ENCODE measurements at regions of chr9 and their contacts with region 1.

Region 1: DNA sequence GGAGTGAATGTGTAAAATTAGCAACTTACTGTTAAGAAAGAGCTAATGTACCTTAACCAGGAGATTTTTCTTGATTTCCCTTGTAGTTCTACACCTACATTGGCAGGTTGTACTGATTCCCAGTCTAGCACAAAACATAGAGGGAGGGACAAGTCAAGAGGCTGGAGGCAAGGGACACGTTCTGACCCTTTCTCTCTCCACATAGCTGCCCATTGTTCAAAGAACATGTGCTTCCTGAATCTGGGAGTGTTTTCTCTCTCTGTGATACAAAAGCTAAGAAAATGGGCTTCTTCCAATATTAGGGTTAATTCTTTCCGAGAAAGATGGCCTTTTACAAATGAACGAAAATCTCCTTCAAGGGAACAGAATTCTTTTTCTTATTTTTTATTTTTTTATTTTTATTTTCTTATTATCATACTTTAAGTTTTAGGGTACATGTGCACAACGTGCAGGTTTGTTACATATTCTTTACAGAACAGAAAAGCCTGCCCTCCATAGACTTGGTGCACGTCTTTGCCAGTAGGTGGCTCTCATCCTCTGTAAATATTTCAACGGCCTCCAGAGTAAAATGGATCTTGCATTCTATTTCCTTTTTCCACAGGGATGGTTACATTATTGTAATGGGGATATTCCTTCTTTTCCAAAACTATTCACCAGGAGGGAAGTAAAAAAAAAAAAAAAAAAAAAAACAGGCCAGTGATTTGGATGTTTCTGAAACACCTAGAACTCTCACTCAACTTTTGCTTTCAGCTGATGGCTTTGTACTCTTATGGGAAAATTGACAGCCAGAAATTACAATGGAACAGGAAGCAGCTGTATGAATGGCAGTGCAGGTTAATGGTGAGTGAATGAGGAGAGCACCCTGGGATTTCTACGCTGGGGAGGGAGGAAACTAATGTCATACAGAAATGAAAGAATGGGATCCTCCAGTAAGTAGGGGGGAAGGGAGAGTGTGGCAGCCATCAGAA is 13.1 kb upstream of the IFNA5 start:
- DNase-seq: no peak
- ATAC-seq: peak; percentile 94
- H3K4me3 ChIP-seq: no peak overlapping the region
- H3K27ac ChIP-seq: no peak overlapping the region
- H3K4me1 ChIP-seq: no peaks in the 10 kb centered on the region
- H3K27me3 ChIP-seq: no peaks in the 10 kb centered on the region
- CTCF ChIP-seq: peak; percentile 59 to 74 (median 66)
- EP300 ChIP-seq: no peak
- POLR2A ChIP-seq: no peak
- RAD21 ChIP-seq: peak; percentile 82

Region 2: GRCh38 chr9:21234153-21234687 is 84.0 kb before region 1 on chr9:
- CTCF ChIA-PET with region 1: interaction called, 14 read pairs
- POLR2A ChIA-PET with region 1: no interaction called
- RAD21 ChIA-PET with region 1: interaction called, 7 read pairs
- SMC1A ChIA-PET with region 1: interaction called, 9 read pairs
- in situ Hi-C with region 1: no loop called
- intact Hi-C with region 1: no loop called
- DNase-seq: no peak
- ATAC-seq: no peak
- H3K4me3 ChIP-seq: no peak overlapping the region
- H3K27ac ChIP-seq: no peak overlapping the region
- H3K4me1 ChIP-seq: no peaks in the 10 kb centered on the region
- H3K27me3 ChIP-seq: no peaks in the 10 kb centered on the region
- CTCF ChIP-seq: no peak
- EP300 ChIP-seq: no peak
- POLR2A ChIP-seq: no peak
- RAD21 ChIP-seq: no peak

Region 3: DNA sequence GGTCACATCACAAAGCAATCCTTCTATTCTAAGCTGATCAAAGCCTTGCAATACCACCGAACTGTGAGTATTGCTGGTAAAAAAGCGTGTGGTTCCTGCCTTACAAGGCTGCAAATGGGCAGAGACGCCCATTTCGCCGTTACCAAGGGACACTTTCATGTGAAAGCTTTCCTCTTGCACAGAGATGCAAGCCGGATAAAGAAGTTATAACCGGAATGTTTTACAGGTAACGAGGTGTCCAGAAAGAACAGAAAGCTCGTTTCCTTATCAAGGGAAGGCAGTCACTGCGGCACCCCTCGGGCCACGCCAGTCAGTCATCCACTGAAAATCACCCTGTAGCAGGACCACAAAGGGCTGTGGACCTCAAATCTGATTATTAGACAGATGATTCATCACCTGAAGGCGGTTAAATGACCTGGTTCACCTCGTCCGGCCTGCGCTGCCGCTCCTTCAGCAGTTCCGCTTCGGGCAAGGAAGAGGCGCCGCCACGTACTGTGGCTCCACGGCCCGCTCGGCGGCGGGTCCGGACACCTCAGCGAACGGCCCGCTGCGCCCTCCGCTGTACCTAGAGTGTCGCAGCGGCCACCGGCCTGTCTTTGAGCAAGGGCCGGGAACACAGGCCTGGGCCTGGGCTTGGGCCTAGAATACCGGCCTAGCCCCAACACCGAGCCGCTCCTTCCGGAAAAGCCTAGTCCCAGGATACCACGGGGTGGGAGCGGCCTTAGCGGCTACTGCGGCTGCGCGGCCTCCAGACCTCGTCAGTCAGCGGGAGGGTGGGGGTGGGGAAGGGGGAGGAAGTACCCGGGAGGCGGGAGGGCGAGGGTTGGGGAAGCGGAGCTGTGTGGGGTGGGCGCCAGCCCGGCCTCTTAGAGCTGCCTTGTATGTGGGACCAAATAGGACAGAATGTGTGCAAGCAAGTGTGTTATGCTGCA is 16.7 kb after region 1 on chr9 and contains the start of gene KLHL9:
- CTCF ChIA-PET with region 1: interaction called, 35 read pairs
- POLR2A ChIA-PET with region 1: no interaction called
- RAD21 ChIA-PET with region 1: interaction called, 9 read pairs
- SMC1A ChIA-PET with region 1: interaction called, 12 read pairs
- in situ Hi-C with region 1: no loop called
- intact Hi-C with region 1: no loop called
- DNase-seq: peak; percentile 73
- ATAC-seq: peak; percentile 89
- H3K4me3 ChIP-seq: peak within 1 kb of the TSS; percentile 82
- H3K27ac ChIP-seq: peak within 1 kb of the TSS; percentile 91
- H3K4me1 ChIP-seq: peaks cover 3% of the 10 kb centered on the region
- H3K27me3 ChIP-seq: no peaks in the 10 kb centered on the region
- CTCF ChIP-seq: no peak
- EP300 ChIP-seq: no peak
- POLR2A ChIP-seq: peak; percentile 91
- RAD21 ChIP-seq: no peak
- polyA plus RNA-seq, gene KLHL9: 3.8 to 5.8 TPM

Region 4: GRCh38 chr9:21413624-21414023 is 95.4 kb after region 1 on chr9:
- CTCF ChIA-PET with region 1: interaction called, 6 read pairs
- POLR2A ChIA-PET with region 1: no interaction called
- RAD21 ChIA-PET with region 1: interaction called, 4 read pairs
- SMC1A ChIA-PET with region 1: interaction called, 7 read pairs
- in situ Hi-C with region 1: no loop called
- intact Hi-C with region 1: loop called (anchors 2 kb)
- DNase-seq: no peak
- ATAC-seq: peak; percentile 96
- H3K4me3 ChIP-seq: no peak overlapping the region
- H3K27ac ChIP-seq: no peak overlapping the region
- H3K4me1 ChIP-seq: peaks cover 6% of the 10 kb centered on the region; the same call in 1 of the 2 replicates
- H3K27me3 ChIP-seq: no peaks in the 10 kb centered on the region; a peak in 1 of 4 replicates
- CTCF ChIP-seq: peak; percentile 50 to 70 (median 69); a peak in 5 of 6 replicates
- EP300 ChIP-seq: no peak
- POLR2A ChIP-seq: no peak
- RAD21 ChIP-seq: peak; percentile 55

Region 5: DNA sequence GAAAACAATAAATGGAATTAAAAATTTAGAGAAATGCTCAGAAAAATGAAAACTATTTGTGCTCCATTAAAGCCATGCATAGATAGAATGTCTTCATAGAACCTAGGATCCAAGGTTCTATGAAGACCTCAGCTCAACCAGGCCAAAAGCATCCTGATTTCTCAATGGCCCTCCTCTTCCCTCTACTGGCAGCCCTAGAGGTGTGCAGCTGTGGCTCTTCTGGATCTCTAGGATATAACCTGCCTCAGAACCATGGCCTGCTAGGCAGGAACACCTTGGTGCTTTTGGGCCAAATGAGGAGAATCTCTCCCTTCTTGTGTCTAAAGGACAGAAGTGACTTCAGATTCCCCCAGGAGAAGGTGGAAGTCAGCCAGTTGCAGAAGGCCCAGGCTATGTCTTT is 137.1 kb after region 1 on chr9:
- CTCF ChIA-PET with region 1: interaction called, 34 read pairs
- POLR2A ChIA-PET with region 1: no interaction called
- RAD21 ChIA-PET with region 1: interaction called, 5 read pairs
- SMC1A ChIA-PET with region 1: interaction called, 57 read pairs
- in situ Hi-C with region 1: loop called (anchors 10 kb)
- intact Hi-C with region 1: loop called (anchors 1 kb)
- DNase-seq: no peak
- ATAC-seq: peak; percentile 98
- H3K4me3 ChIP-seq: no peak overlapping the region
- H3K27ac ChIP-seq: no peak overlapping the region
- H3K4me1 ChIP-seq: no peaks in the 10 kb centered on the region
- H3K27me3 ChIP-seq: 0 out of 4 replicates have a peak, but pooled peaks cover 0 to 2% of the 10 kb centered on the region in 2 experiments
- CTCF ChIP-seq: peak; percentile 81 to 87 (median 86)
- EP300 ChIP-seq: no peak
- POLR2A ChIP-seq: no peak
- RAD21 ChIP-seq: peak; percentile 89

Region 6: GRCh38 chr9:21709464-21710058 is 391.3 kb after region 1 on chr9:
- CTCF ChIA-PET with region 1: interaction called, 10 read pairs
- POLR2A ChIA-PET with region 1: no interaction called
- RAD21 ChIA-PET with region 1: no interaction called
- SMC1A ChIA-PET with region 1: no interaction called
- in situ Hi-C with region 1: no loop called
- intact Hi-C with region 1: no loop called
- DNase-seq: no peak
- ATAC-seq: peak; percentile 82
- H3K4me3 ChIP-seq: no peak overlapping the region
- H3K27ac ChIP-seq: no peak overlapping the region
- H3K4me1 ChIP-seq: no peaks in the 10 kb centered on the region
- H3K27me3 ChIP-seq: no peaks in the 10 kb centered on the region
- CTCF ChIP-seq: peak; percentile 68 to 88 (median 85)
- EP300 ChIP-seq: no peak
- POLR2A ChIP-seq: no peak
- RAD21 ChIP-seq: peak; percentile 57

Region 7: GRCh38 chr9:21796768-21797167 is 478.5 kb after region 1 on chr9:
- CTCF ChIA-PET with region 1: no interaction called
- POLR2A ChIA-PET with region 1: no interaction called
- RAD21 ChIA-PET with region 1: no interaction called
- SMC1A ChIA-PET with region 1: no interaction called
- in situ Hi-C with region 1: loop called (anchors 5 kb)
- intact Hi-C with region 1: no loop called
- DNase-seq: no peak
- ATAC-seq: no peak
- H3K4me3 ChIP-seq: no peak overlapping the region
- H3K27ac ChIP-seq: no peak overlapping the region
- H3K4me1 ChIP-seq: peaks cover 5% of the 10 kb centered on the region
- H3K27me3 ChIP-seq: peaks cover 0 to 19% of the 10 kb centered on the region in 2 experiments; a peak in 2 of 4 replicates
- CTCF ChIP-seq: no peak
- EP300 ChIP-seq: no peak
- POLR2A ChIP-seq: no peak
- RAD21 ChIP-seq: no peak

Measured in GM12878 (cell line).